GM18951 (cell line): ENCODE measurements at regions of chr15 and their contacts with region 1.

Region 1: DNA sequence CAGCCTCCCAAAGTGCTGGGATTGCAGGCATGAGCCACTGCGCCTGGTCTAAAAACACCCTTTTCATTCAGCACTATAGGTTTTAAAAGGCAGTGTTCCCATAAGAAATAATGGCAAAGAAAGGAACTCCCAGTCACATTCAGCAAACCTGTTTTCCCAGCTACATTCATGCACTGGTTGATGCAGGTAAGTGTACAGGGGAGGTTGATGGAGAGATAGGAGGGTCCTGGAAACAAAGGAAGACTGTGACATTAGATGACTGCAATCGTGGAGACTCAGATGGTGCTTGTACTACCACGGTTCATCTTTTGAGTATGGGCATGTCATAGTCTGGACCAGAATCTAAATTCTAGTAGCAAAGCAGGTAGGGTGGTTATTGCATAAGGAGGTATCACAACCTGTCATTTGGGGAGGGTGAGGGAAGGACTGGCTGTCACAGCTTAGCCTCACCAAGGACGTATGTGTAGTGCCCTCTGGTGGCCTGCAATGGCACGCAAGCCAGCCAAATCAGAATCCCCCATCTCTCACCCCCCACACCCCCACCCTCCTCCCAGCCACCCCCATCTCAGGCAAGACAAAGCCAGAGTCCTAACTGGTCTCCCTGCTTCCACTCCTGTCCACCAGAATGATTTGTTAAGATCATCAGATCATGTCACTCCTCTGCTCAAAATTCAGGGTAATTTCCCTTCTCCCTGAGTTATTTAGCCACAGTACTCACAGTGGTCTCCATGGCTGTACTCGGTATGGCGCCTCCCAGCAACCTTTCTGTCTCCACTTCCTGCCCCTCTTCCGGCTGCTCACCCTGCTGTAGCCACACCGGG is 28.8 kb upstream of the UBL7 start:
- POLR2A ChIP-seq: peak; percentile 38

Region 2: DNA sequence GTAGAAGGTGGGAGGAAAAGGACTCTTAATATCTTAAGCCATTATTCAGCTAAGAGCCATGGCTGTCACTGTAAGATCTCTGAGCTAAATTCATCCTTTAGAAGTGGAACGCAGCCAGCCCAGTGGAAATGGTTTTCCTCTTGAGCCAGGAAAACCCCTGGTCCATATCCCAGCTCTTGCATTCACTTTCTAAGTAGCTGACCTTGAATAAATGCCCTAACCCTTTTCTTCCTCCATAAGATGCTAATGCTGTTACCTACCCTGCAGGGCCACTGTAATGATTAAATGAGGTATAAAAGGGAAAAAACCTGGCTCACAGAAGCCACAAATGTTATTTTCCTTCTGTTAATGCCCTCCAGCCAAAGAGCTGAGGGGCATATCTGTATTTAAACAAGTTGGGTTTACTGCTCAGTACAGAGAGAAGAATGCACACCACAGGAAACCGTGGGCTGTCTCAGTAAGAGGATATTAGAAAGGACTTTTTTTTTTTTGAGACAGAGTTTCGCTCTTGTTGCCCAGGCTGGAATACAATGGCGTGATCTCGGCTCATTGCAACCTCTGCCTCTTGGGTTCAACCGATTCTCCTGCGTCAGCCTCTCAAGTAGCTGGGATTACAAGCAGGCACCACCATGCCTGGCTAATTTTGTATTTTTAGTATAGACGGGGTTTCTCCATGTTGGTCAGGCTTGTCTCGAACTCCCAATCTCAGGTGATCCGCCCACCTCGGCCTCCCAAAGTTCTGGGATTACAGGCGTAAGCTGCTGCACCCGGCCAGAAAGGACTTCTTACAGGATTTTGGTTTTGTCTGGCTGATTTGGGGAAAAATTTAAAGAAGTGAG is 35.6 kb before region 1 on chr15:
- in situ Hi-C with region 1: loop called (anchors 5 kb)
- POLR2A ChIP-seq: no peak

Region 3: GRCh38 chr15:74653426-74654123 is 163.8 kb after region 1 on chr15:
- in situ Hi-C with region 1: no loop called
- POLR2A ChIP-seq: no peak

Region 4: DNA sequence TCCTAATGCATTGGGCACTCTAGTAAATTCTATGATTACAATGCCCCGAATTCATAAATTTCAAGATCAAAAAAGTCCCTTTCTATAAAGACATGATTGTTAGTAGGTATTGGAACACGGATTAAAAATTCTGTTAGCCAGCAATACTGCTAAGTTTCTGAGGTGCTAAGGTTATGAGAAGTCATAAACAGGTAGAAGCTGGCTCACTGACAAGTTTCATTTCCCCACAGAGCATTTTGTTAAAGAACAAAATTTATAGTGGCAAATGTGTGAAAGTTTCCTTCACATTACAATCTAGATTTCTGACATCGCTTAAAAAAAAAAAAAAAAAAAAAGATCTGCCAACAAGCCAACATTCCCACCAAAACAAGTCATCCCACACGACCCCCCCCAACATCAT is 891.0 kb after region 1 on chr15:
- in situ Hi-C with region 1: no loop called
- POLR2A ChIP-seq: no peak